Activated CD8-positive, alpha-beta T cell treated with anti-CD3 and anti-CD28 coated beads, Interleukin-2, amount 10 ng/mL, durations not matched to agents 7 days and 5 days (primary cell): ENCODE measurements at regions of chr17 and their contacts with region 1.

Region 1: GRCh38 chr17:44110823-44111633 is 12.4 kb downstream of the HDAC5 start:
- DNase-seq: peak; percentile 84
- ATAC-seq: peak; percentile 78
- H3K4me3 Mint-ChIP-seq: peak overlapping the region; percentile 63
- H3K27ac Mint-ChIP-seq: peak overlapping the region; percentile 64
- H3K4me1 Mint-ChIP-seq: peaks cover 31% of the 10 kb centered on the region
- H3K27me3 Mint-ChIP-seq: no peaks in the 10 kb centered on the region

Region 2: DNA sequence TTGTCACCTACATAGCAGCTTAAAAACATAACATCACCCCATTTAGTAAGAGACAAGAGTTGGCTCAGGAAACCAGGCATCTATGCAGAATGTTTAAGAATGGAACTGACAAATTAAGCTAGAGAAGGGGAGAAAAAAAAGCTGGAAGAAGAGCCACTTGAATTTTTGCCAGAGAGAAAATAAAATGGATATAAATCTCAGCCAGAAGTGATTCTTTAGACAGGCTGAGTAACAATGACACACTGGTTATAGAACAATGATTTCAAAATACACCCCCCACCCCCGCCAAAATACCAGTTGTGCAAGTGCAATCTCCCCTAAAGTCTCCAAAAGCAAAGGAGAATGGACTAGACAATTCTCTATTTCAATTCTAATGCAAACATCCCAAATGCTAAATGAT is 67.0 kb before region 1 on chr17:
- CTCF ChIA-PET with region 1: no interaction called
- POLR2A ChIA-PET with region 1: no interaction called
- DNase-seq: no peak
- ATAC-seq: no peak
- H3K4me3 Mint-ChIP-seq: no peak overlapping the region
- H3K27ac Mint-ChIP-seq: no peak overlapping the region
- H3K4me1 Mint-ChIP-seq: peaks cover 17% of the 10 kb centered on the region
- H3K27me3 Mint-ChIP-seq: no peaks in the 10 kb centered on the region

Region 3: GRCh38 chr17:44123356-44124117 is 12.5 kb after region 1 on chr17 and contains the start of gene HDAC5:
- CTCF ChIA-PET with region 1: interaction called, 20 read pairs
- POLR2A ChIA-PET with region 1: interaction called, 33 read pairs
- DNase-seq: peak; percentile 96
- ATAC-seq: peak; percentile 92
- H3K4me3 Mint-ChIP-seq: peak within 1 kb of the TSS; percentile 90
- H3K27ac Mint-ChIP-seq: peak within 1 kb of the TSS; percentile 98
- H3K4me1 Mint-ChIP-seq: peaks cover 16% of the 10 kb centered on the region
- H3K27me3 Mint-ChIP-seq: peaks cover 5% of the 10 kb centered on the region
- total RNA-seq, gene HDAC5: 24.0 to 24.9 TPM